ENCODE measurements at regions of chr6 and their contacts with region 1.

Region 1: DNA sequence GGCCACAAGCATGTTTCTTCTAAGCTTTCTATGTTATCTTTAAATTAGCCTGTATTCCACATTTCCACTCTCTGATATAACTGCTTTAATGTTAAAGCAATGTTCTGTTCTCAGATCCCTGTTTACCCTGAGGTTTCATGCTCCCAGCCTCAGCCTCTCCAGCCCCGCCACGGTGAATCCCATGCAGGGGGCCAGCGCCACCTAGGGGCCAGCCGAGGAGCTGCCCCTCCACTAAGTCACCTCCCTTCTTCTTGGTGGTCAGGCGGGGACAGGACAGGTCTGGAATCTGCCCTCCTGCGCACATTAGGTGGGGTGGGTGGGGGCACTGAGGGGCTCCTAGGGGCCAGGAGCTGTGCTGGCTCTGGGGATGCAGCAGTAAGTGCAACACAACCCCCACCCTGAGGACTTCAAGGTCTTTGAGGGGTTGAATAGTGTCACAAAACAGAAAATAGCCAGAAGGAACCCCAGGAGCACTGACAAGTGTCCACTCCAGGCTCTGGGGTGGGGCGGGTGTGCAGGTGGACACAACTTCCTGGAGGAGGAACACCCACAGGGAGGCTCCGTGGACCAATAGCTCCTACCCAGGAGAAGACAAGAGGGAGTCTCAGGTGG is 61.6 kb downstream of the RAB44 start:
- DNase-seq: peak; percentile 85
- H3K4me3 ChIP-seq: no peak overlapping the region
- H3K27ac ChIP-seq: no peak overlapping the region
- H3K4me1 ChIP-seq: peaks cover 33% of the 10 kb centered on the region
- H3K27me3 ChIP-seq: no peaks in the 10 kb centered on the region
- CTCF ChIP-seq: peak; percentile 91 to 97
- POLR2A ChIP-seq: no peak

Region 2: DNA sequence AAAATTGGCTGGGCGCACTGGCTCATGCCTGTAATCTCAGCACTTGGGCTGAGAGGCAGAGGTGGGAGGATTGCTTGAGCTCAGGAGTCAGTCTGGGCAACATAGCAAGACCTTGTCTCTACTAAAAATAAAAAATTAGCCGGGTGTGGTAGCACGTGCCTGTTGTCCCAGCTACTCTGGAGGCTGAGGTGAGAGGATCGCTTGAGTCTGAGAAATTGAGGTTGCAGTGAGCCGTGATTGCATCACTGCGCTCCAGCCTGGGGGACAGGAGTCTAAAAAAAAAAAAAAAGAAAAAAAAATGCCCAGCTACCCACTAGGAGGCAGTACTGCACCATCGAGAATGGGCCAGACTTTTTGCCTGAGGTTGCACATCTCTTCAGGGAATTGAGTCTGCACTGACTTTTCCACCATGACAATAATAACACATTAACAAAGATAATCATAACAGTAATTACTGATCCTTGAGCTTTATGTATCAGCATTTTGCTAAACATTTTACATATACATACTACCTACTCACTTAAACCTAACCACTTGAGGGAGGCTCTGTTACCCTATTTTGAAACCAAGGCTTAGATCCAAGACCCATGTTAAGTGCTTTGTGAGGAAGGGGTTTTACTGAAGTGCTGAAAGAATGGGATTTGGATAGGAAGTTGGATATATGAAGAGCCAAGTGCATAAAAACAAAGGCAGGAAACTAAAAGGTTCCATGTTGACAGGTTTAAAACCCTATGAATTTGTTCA is 144.1 kb before region 1 on chr6:
- CTCF ChIA-PET with region 1: interaction called, 108 read pairs
- POLR2A ChIA-PET with region 1: interaction called, 3 read pairs
- dilution Hi-C with region 1: no loop called
- intact Hi-C with region 1: loop called (anchors 1 kb)
- DNase-seq: peak; percentile 85
- H3K4me3 ChIP-seq: no peak overlapping the region
- H3K27ac ChIP-seq: no peak overlapping the region
- H3K4me1 ChIP-seq: peaks cover 17% of the 10 kb centered on the region
- H3K27me3 ChIP-seq: no peaks in the 10 kb centered on the region
- CTCF ChIP-seq: peak; percentile 65 to 74
- POLR2A ChIP-seq: no peak

Region 3: DNA sequence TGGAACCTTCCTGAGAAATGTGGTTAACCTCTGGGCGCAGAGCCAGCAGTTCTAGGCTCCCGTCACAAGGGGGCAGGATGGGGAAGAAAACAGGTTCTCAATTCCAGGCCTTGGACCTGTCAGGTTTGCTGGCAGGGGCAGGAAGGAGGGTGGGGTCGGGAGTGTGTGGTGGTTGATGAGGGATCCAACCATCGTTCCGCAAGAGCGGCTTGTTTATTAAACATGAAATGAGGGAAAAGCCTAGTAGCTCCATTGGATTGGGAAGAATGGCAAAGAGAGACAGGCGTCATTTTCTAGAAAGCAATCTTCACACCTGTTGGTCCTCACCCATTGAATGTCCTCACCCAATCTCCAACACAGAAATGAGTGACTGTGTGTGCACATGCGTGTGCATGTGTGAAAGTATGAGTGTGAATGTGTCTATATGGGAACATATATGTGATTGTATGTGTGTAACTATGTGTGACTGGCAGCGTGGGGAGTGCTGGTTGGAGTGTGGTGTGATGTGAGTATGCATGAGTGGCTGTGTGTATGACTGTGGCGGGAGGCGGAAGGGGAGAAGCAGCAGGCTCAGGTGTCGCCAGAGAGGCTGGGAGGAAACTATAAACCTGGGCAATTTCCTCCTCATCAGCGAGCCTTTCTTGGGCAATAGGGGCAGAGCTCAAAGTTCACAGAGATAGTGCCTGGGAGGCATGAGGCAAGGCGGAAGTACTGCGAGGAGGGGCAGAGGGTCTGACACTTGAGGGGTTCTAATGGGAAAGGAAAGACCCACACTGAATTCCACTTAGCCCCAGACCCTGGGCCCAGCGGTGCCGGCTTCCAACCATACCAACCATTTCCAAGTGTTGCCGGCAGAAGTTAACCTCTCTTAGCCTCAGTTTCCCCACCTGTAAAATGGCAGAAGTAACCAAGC is 135.5 kb before region 1 on chr6:
- CTCF ChIA-PET with region 1: interaction called, 29 read pairs
- POLR2A ChIA-PET with region 1: interaction called, 3 read pairs
- dilution Hi-C with region 1: no loop called
- intact Hi-C with region 1: loop called (anchors 1 kb)
- DNase-seq: peak; percentile 84
- H3K4me3 ChIP-seq: no peak overlapping the region
- H3K27ac ChIP-seq: no peak overlapping the region
- H3K4me1 ChIP-seq: peaks cover 7% of the 10 kb centered on the region
- H3K27me3 ChIP-seq: no peaks in the 10 kb centered on the region
- CTCF ChIP-seq: peak; percentile 84 to 87
- POLR2A ChIP-seq: no peak

Region 4: GRCh38 chr6:36688534-36689075 is 70.6 kb before region 1 on chr6:
- CTCF ChIA-PET with region 1: interaction called, 18 read pairs
- POLR2A ChIA-PET with region 1: interaction called, 4 read pairs
- dilution Hi-C with region 1: no loop called
- intact Hi-C with region 1: loop called (anchors 2 kb)
- DNase-seq: no peak
- H3K4me3 ChIP-seq: no peak overlapping the region
- H3K27ac ChIP-seq: no peak overlapping the region
- H3K4me1 ChIP-seq: peaks cover 3% of the 10 kb centered on the region
- H3K27me3 ChIP-seq: no peaks in the 10 kb centered on the region
- CTCF ChIP-seq: no peak
- POLR2A ChIP-seq: no peak

Region 5: GRCh38 chr6:36724514-36725390 is 34.5 kb before region 1 on chr6:
- CTCF ChIA-PET with region 1: interaction called, 18 read pairs
- POLR2A ChIA-PET with region 1: no interaction called
- dilution Hi-C with region 1: no loop called
- intact Hi-C with region 1: loop called (anchors 1 kb)
- DNase-seq: peak; percentile 73
- H3K4me3 ChIP-seq: no peak overlapping the region
- H3K27ac ChIP-seq: no peak overlapping the region
- H3K4me1 ChIP-seq: peaks cover 2% of the 10 kb centered on the region
- H3K27me3 ChIP-seq: no peaks in the 10 kb centered on the region
- CTCF ChIP-seq: peak; percentile 43 to 64
- POLR2A ChIP-seq: no peak

Region 6: DNA sequence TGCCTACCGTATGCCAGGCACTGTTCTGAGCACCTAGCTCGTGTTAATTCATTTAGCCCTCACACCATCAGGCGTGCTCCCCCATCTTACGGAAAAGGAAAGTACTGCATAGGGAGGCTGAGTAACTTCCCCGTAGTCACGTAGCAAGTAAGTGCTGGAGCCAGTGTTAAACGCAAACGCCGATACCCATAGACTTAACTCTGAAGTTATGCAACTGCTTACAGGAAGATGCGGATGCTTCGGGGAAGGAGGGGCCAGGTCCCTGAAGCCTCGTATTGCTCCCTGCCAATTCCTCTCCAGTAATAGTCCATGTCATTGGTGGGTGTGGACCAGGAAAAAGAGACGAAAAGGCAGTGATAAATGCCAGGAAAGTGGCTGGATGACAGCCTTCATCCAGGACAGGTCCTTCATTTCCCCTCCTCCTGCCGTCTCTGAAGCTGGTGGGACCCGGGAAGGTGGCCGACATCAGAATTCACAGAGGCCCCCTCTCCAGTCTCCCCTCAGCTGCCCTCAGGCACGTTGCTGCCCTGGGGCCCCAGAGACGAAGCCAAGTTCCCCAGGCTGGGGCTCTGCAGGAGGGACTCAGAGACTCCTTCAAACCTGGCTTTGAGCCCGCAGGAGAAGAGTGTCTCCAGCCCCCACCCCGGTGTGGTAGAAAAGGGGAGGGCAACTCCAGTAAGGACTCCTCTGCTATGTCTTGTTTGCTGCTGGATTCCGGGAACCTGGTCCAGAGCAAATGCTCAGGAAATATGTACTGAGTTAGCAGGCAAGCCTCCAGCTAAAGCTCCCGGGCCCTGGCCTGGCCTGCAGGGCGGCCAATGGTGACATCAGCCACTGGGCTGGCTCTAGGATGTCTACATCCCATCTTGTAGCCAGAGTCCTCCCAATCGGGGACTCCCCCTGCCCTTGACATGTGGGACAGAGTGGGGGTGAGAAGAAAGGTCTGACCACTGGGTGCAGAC is 23.9 kb before region 1 on chr6:
- CTCF ChIA-PET with region 1: interaction called, 22 read pairs
- POLR2A ChIA-PET with region 1: interaction called, 3 read pairs
- dilution Hi-C with region 1: no loop called
- intact Hi-C with region 1: no loop called
- DNase-seq: peak; percentile 68
- H3K4me3 ChIP-seq: no peak overlapping the region
- H3K27ac ChIP-seq: no peak overlapping the region
- H3K4me1 ChIP-seq: peaks cover 31% of the 10 kb centered on the region
- H3K27me3 ChIP-seq: no peaks in the 10 kb centered on the region
- CTCF ChIP-seq: peak in 1 of 2 donors; percentile 27
- POLR2A ChIP-seq: no peak

Region 7: DNA sequence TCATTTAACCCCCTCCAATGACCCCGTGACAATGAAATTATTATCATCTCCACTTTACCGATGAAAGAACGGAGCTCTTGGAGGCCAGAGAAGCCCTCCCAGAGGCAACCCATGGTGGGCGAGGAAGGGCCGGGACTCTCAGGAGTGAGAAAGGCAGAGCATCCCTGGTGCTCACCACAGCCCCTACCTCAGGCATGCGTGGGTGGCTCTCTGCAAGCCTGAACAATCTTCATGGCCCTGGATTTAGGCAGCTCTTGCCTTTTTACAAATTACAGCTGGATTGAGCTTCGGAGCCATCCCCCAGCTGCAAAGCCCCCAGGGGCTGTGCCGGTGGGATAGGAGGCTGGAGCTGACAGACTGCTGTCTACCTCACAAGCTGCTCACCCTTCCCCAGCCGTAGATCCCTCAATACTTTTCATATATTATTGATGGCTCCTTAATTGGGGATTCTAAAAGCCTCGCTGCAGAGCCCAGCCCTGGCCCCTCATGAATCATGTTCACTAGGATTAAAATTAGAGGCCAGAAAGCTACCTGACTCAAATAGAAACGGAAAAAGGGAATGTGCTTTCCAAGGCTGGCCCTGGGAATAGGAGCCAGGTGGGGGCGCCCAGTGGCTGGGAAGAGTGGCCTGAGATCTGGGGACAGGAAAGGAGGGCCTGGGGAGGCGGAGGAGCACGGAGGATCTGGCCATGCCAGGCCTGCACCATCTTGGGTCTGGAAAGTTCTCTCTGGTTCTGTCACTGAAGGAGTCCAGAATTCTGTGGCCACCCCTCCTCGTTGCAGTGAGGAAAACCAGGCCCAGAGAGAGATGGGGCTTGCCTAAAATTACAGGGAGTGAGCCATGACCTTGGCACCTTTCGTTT is 50.9 kb after region 1 on chr6:
- CTCF ChIA-PET with region 1: no interaction called
- POLR2A ChIA-PET with region 1: no interaction called
- dilution Hi-C with region 1: no loop called
- intact Hi-C with region 1: no loop called
- DNase-seq: no peak
- H3K4me3 ChIP-seq: no peak overlapping the region
- H3K27ac ChIP-seq: no peak overlapping the region
- H3K4me1 ChIP-seq: peaks cover 4% of the 10 kb centered on the region
- H3K27me3 ChIP-seq: no peaks in the 10 kb centered on the region
- CTCF ChIP-seq: peak in 1 of 2 donors; percentile 26
- POLR2A ChIP-seq: no peak

Measured in endothelial cell of umbilical vein (primary cell).